Activated CD8-positive, alpha-beta T cell treated with anti-CD3 and anti-CD28 coated beads, Interleukin-2, amount 10 ng/mL, durations not matched to agents 7 days and 5 days (primary cell): ENCODE measurements at regions of chr13 and their contacts with region 1.

Region 1: GRCh38 chr13:21297914-21298831 is 121.7 kb downstream of the MRPL57 start:
- DNase-seq: peak; percentile 87
- ATAC-seq: peak; percentile 94
- H3K4me3 Mint-ChIP-seq: peak overlapping the region; percentile 89
- H3K27ac Mint-ChIP-seq: peak overlapping the region; percentile 66
- H3K4me1 Mint-ChIP-seq: peaks cover 25% of the 10 kb centered on the region
- H3K27me3 Mint-ChIP-seq: no peaks in the 10 kb centered on the region

Region 2: GRCh38 chr13:20942938-20943559 is 355.1 kb before region 1 on chr13:
- CTCF ChIA-PET with region 1: interaction called, 11 read pairs
- POLR2A ChIA-PET with region 1: no interaction called
- DNase-seq: no peak
- ATAC-seq: no peak
- H3K4me3 Mint-ChIP-seq: no peak overlapping the region
- H3K27ac Mint-ChIP-seq: no peak overlapping the region
- H3K4me1 Mint-ChIP-seq: peaks cover 10% of the 10 kb centered on the region
- H3K27me3 Mint-ChIP-seq: peaks cover 26% of the 10 kb centered on the region

Region 3: DNA sequence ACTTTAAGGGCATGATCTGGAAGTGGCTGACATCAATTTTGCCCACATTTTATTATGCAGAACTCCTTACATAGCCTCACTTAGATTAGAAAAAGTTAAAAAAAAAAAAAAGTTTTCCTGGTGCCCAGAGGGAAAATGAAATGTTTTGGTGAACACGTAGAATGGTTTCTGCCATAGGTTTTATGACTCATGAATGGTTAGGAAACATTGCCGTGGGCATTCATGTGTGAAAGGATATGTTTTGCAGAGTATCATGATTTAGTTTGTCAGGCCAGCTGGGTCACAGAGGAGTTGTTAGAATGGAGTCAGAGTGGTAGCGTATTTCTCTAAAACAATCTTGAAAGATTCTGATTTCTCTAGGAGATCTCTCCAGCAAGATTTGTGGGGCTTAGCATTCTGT is 12.0 kb after region 1 on chr13:
- CTCF ChIA-PET with region 1: interaction called, 39 read pairs
- POLR2A ChIA-PET with region 1: no interaction called
- DNase-seq: no peak
- ATAC-seq: no peak
- H3K4me3 Mint-ChIP-seq: no peak overlapping the region
- H3K27ac Mint-ChIP-seq: no peak overlapping the region
- H3K4me1 Mint-ChIP-seq: peaks cover 6% of the 10 kb centered on the region
- H3K27me3 Mint-ChIP-seq: no peaks in the 10 kb centered on the region

Region 4: GRCh38 chr13:21389124-21389523 is 91.0 kb after region 1 on chr13:
- CTCF ChIA-PET with region 1: interaction called, 14 read pairs
- POLR2A ChIA-PET with region 1: no interaction called
- DNase-seq: no peak
- ATAC-seq: peak; percentile 55
- H3K4me3 Mint-ChIP-seq: no peak overlapping the region
- H3K27ac Mint-ChIP-seq: peak overlapping the region; percentile 74
- H3K4me1 Mint-ChIP-seq: peaks cover 17% of the 10 kb centered on the region
- H3K27me3 Mint-ChIP-seq: no peaks in the 10 kb centered on the region

Region 5: DNA sequence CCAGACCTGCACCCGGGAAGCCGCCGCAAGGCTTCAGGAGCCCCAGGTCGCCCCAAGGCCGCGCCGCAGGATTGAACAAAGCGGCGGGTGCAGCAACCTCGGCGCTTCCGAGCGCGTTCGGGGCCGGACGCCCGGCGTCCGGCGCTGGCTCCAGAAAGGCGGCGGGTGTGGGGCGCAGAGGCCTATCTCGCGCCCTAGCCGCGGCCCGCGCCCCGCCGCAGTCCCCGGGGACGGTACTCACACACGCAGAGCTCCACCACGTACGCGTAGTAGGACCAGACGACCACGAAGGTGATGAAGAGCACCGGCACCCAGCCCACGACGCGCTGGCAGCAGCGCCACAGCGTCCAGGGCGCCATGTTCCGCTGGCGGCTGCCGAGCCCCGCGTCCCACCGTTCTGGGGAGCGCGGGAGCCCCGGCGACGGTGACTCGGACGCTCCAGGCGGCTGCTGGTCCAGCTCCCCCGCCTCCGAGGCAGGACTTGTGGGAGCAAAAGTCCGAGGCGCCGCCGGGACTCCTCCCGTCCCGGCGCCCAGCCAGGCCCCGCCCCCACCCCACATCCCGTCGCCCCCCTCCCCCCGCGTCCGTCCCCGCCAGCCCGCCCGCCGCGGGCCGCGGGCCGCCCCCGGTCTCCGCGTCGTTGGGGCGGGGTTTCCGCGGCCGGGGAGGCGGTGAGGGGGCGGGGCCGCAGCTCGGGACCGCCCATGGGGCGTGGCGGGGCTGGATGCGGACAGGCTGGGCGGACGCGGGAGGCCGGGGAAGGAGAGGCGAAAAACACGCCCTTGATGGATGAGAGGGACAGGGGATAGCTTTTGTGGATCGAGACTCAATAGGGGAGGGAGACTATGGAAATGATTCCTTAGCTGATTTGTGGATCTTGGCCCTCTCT is 160.9 kb after region 1 on chr13 and contains the start of gene ZDHHC20:
- CTCF ChIA-PET with region 1: interaction called, 17 read pairs
- POLR2A ChIA-PET with region 1: interaction called, 6 read pairs
- DNase-seq: peak; percentile 89
- ATAC-seq: peak; percentile 87
- H3K4me3 Mint-ChIP-seq: peak within 1 kb of the TSS; percentile 96
- H3K27ac Mint-ChIP-seq: peak within 1 kb of the TSS; percentile 96
- H3K4me1 Mint-ChIP-seq: peaks cover 31% of the 10 kb centered on the region
- H3K27me3 Mint-ChIP-seq: no peaks in the 10 kb centered on the region
- total RNA-seq, gene ZDHHC20: 98.2 to 106 TPM